PC-9 (cell line): ENCODE measurements at regions of chr1 and their contacts with region 1.

Region 1: DNA sequence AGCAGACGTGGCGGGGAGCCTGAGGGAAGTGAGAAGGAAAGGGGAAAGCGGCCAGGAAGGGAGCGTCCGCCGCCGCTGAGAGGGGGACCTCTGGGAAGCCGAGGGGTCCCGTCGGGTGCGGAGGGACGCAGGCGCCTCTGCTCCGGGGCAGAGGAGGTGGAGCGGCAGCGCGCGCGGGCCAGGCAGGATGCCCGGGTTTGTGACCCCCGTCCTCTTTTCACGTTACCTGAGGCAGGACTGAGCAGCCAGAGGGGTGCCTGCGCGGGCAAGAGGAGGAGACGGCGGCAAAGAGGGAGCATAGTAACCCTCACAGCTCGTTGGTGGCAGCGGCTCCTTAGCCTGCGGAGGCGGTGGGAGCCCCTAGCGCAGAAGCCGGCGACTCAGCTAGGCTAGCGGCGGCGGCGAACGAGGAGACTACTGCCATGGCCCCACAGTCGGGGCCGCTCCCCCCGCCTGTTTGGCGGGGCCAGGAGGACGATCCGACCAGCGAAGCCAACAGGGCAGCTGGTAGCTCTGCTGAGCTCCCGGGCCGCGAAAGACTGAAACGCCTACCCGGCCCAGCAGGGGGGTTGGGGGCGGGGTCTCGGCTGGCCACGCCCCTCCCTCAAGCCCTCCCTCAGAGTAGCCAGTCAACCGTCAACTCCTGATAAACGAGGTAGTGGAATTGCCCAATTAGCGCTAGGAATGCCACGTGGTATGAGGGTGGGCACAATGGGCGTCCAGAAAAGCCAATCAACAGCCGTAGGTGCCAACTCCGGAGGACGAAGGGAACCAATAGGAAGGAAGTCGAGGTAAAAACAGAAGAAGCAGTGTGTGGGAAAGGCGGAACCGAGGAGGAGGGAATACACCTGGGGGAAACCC is at the start of gene TESK2:
- DNase-seq: peak; percentile 100
- H3K4me3 ChIP-seq: peak within 1 kb of the TSS; percentile 73
- H3K27ac ChIP-seq: no peak within 1 kb of the TSS
- H3K4me1 ChIP-seq: peaks cover 16% of the 10 kb centered on the region
- H3K27me3 ChIP-seq: no peaks in the 10 kb centered on the region
- CTCF ChIP-seq: 0 out of 2 replicates have a peak, but pooled peaks have one; percentile 20
- total RNA-seq, gene TESK2: 13.8 and 17.5 TPM in 2 replicates

Region 2: GRCh38 chr1:44835738-44836675 is 654.8 kb before region 1 on chr1:
- CTCF ChIA-PET with region 1: no interaction called
- POLR2A ChIA-PET with region 1: no interaction called
- intact Hi-C with region 1: loop called (anchors 5 kb)
- DNase-seq: peak; percentile 61 to 84
- H3K4me3 ChIP-seq: no peak overlapping the region
- H3K27ac ChIP-seq: no peak overlapping the region
- H3K4me1 ChIP-seq: no peaks in the 10 kb centered on the region
- H3K27me3 ChIP-seq: no peaks in the 10 kb centered on the region
- CTCF ChIP-seq: peak; percentile 85

Region 3: DNA sequence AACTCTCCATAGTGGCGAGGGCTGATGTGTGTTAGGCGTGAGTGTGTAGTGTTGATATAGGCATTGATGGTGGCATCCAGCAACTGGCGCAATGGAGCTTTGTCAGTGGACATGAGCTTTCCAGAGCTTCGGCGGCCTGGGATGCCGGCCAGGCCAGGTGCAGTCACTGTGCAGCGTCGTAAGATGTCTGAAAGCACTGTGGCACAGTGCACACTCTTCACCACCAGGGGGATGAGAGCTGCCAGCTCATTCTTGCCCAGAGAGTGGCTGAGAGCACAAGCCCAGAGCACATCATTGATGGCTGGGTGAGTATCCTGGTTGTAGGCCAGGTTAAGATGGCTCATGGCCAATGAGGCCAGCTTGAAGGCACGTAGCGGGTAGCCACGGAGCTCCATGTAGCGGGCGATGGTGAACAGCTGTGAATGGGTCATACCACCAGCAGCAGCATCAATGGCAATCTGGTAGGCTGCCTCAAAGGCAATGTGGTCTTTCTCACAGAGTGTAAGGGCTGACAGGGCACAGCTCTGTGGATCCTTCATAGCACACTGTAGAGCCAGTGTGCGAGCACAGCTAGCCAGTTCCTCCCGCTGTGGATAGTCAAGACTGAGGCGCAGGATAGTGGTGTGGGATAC is 472.1 kb before region 1 on chr1:
- CTCF ChIA-PET with region 1: interaction called, 13 read pairs
- POLR2A ChIA-PET with region 1: no interaction called
- intact Hi-C with region 1: loop called (anchors 1 kb)
- DNase-seq: peak; percentile 46 to 67
- H3K4me3 ChIP-seq: no peak overlapping the region
- H3K27ac ChIP-seq: no peak overlapping the region
- H3K4me1 ChIP-seq: no peaks in the 10 kb centered on the region
- H3K27me3 ChIP-seq: no peaks in the 10 kb centered on the region
- CTCF ChIP-seq: peak; percentile 78

Region 4: GRCh38 chr1:45339789-45340570 is 150.9 kb before region 1 on chr1 and contains the starts of genes MUTYH and TOE1:
- CTCF ChIA-PET with region 1: interaction called, 4 read pairs
- POLR2A ChIA-PET with region 1: interaction called, 4 read pairs
- intact Hi-C with region 1: loop called (anchors 1 kb)
- DNase-seq: peak; percentile 79 to 97
- H3K4me3 ChIP-seq: peak within 1 kb of the TSS; percentile 68
- H3K27ac ChIP-seq: peak within 1 kb of the TSS; percentile 86
- H3K4me1 ChIP-seq: peaks cover 55% of the 10 kb centered on the region
- H3K27me3 ChIP-seq: no peaks in the 10 kb centered on the region
- CTCF ChIP-seq: 0 out of 2 replicates have a peak, but pooled peaks have one; percentile 24
- total RNA-seq, gene MUTYH: 52.4 and 53.2 TPM in 2 replicates
- total RNA-seq, gene TOE1: 14.5 and 20.4 TPM in 2 replicates

Region 5: GRCh38 chr1:45359882-45360513 is 130.9 kb before region 1 on chr1:
- CTCF ChIA-PET with region 1: interaction called, 13 read pairs
- POLR2A ChIA-PET with region 1: no interaction called
- intact Hi-C with region 1: loop called (anchors 1 kb)
- DNase-seq: peak; percentile 49 to 64
- H3K4me3 ChIP-seq: no peak overlapping the region
- H3K27ac ChIP-seq: no peak overlapping the region
- H3K4me1 ChIP-seq: peaks cover 21% of the 10 kb centered on the region
- H3K27me3 ChIP-seq: no peaks in the 10 kb centered on the region
- CTCF ChIP-seq: peak; percentile 84

Region 6: DNA sequence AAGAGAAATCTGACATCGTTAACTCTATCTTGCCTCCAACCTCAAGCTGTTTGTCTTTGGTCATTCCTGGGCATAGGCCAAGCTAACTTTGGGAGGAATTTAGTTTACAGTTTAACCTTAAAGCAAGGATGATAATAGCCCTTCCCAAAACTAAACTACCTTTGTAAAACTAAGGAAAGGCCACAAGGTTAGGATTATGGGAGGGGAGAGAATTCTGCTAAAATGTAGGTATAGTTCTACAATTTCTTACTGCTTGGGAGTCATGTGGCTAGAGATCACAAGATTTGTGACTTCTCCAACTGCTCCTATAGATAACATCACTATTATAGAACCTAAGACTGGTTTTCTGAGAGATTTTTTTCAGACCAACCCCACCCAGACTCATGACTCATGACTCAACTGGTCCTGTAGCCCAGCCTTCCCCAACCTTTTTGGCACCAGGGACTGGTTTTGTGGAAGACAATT is 80.0 kb before region 1 on chr1:
- CTCF ChIA-PET with region 1: interaction called, 3 read pairs
- POLR2A ChIA-PET with region 1: no interaction called
- intact Hi-C with region 1: loop called (anchors 2 kb)
- DNase-seq: peak; percentile 66 to 83
- H3K4me3 ChIP-seq: peak overlapping the region; percentile 10; the same call in 1 of the 2 replicates
- H3K27ac ChIP-seq: peak overlapping the region; percentile 68
- H3K4me1 ChIP-seq: peaks cover 30% of the 10 kb centered on the region
- H3K27me3 ChIP-seq: no peaks in the 10 kb centered on the region
- CTCF ChIP-seq: no peak

Region 7: GRCh38 chr1:45429561-45430159 is 61.2 kb before region 1 on chr1:
- CTCF ChIA-PET with region 1: no interaction called
- POLR2A ChIA-PET with region 1: no interaction called
- intact Hi-C with region 1: no loop called
- DNase-seq: no peak
- H3K4me3 ChIP-seq: no peak overlapping the region
- H3K27ac ChIP-seq: no peak overlapping the region
- H3K4me1 ChIP-seq: no peaks in the 10 kb centered on the region
- H3K27me3 ChIP-seq: no peaks in the 10 kb centered on the region
- CTCF ChIP-seq: no peak

Region 8: GRCh38 chr1:46223472-46223943 is 732.7 kb after region 1 on chr1:
- CTCF ChIA-PET with region 1: no interaction called
- POLR2A ChIA-PET with region 1: no interaction called
- intact Hi-C with region 1: loop called (anchors 10 kb)
- DNase-seq: peak; percentile 81 to 87
- H3K4me3 ChIP-seq: no peak overlapping the region
- H3K27ac ChIP-seq: no peak overlapping the region
- H3K4me1 ChIP-seq: peaks cover 5% of the 10 kb centered on the region
- H3K27me3 ChIP-seq: no peaks in the 10 kb centered on the region
- CTCF ChIP-seq: peak; percentile 97